ENCODE measurements at regions of chr18 and their contacts with region 1.

Region 1: GRCh38 chr18:7958081-7958896 is 391.2 kb downstream of the PTPRM start:
- DNase-seq: no peak
- H3K4me3 Mint-ChIP-seq: no peak overlapping the region
- H3K27ac Mint-ChIP-seq: peak overlapping the region; percentile 54
- H3K4me1 Mint-ChIP-seq: peaks cover 31% of the 10 kb centered on the region
- H3K27me3 Mint-ChIP-seq: no peaks in the 10 kb centered on the region

Region 2: GRCh38 chr18:7572822-7573221 is 385.5 kb before region 1 on chr18:
- CTCF ChIA-PET with region 1: no interaction called
- POLR2A ChIA-PET with region 1: no interaction called
- intact Hi-C with region 1: loop called (anchors 5 kb)
- DNase-seq: peak; percentile 13
- H3K4me3 Mint-ChIP-seq: no peak overlapping the region
- H3K27ac Mint-ChIP-seq: peak overlapping the region; percentile 3
- H3K4me1 Mint-ChIP-seq: peaks cover 11% of the 10 kb centered on the region
- H3K27me3 Mint-ChIP-seq: peaks cover 20% of the 10 kb centered on the region

Region 3: DNA sequence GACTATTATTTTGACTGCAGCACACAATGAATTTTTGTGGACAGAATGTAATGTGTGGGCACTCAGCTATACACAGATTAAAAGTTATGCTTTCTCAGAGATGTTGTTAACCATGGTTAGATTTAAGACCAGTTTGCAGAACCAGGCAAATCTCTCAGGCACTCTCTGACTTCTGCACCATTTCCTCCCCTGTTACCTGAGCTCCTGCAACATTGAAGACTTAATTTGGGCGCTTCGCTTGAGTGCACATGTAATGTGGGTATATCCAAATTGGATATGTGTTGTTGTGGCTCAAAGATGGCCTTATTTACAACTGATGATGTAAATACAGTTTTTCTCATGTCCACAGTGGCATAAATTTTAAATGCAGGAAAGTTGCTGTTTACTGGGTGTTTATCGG is 78.3 kb after region 1 on chr18:
- CTCF ChIA-PET with region 1: no interaction called
- POLR2A ChIA-PET with region 1: no interaction called
- intact Hi-C with region 1: loop called (anchors 2 kb)
- DNase-seq: no peak
- H3K4me3 Mint-ChIP-seq: no peak overlapping the region
- H3K27ac Mint-ChIP-seq: no peak overlapping the region
- H3K4me1 Mint-ChIP-seq: peaks cover 5% of the 10 kb centered on the region
- H3K27me3 Mint-ChIP-seq: no peaks in the 10 kb centered on the region

Region 4: GRCh38 chr18:8167036-8167435 is 208.7 kb after region 1 on chr18:
- CTCF ChIA-PET with region 1: no interaction called
- POLR2A ChIA-PET with region 1: no interaction called
- intact Hi-C with region 1: no loop called
- DNase-seq: no peak
- H3K4me3 Mint-ChIP-seq: no peak overlapping the region
- H3K27ac Mint-ChIP-seq: no peak overlapping the region
- H3K4me1 Mint-ChIP-seq: no peaks in the 10 kb centered on the region
- H3K27me3 Mint-ChIP-seq: no peaks in the 10 kb centered on the region

Region 5: GRCh38 chr18:8571399-8571798 is 613.1 kb after region 1 on chr18:
- CTCF ChIA-PET with region 1: no interaction called
- POLR2A ChIA-PET with region 1: no interaction called
- intact Hi-C with region 1: no loop called
- DNase-seq: no peak
- H3K4me3 Mint-ChIP-seq: no peak overlapping the region
- H3K27ac Mint-ChIP-seq: no peak overlapping the region
- H3K4me1 Mint-ChIP-seq: no peaks in the 10 kb centered on the region
- H3K27me3 Mint-ChIP-seq: peaks cover 2% of the 10 kb centered on the region